Aorta (tissue), 5 donors: ENCODE measurements at regions of chr17 and their contacts with region 1.

Region 1: GRCh38 chr17:81666342-81667191 is at the starts of genes CCDC137 and OXLD1:
- DNase-seq: peak; percentile 98 to 99
- ATAC-seq: peak; percentile 97
- H3K4me3 ChIP-seq: peak within 1 kb of the TSS; percentile 61 to 65
- H3K27ac ChIP-seq: peak within 1 kb of the TSS in 1 of 2 donors; percentile 50
- H3K4me1 ChIP-seq: no peaks in the 10 kb centered on the region
- H3K27me3 ChIP-seq: no peaks in the 10 kb centered on the region
- total RNA-seq, gene CCDC137: 13.0 to 13.4 TPM
- total RNA-seq, gene OXLD1: 14.0 to 20.0 TPM

Region 2: GRCh38 chr17:81593105-81593871 is 73.3 kb before region 1 on chr17:
- intact Hi-C with region 1: no loop called
- DNase-seq: no peak
- ATAC-seq: no peak
- H3K4me3 ChIP-seq: no peak overlapping the region
- H3K27ac ChIP-seq: no peak overlapping the region
- H3K4me1 ChIP-seq: no peaks in the 10 kb centered on the region
- H3K27me3 ChIP-seq: no peaks in the 10 kb centered on the region

Region 3: DNA sequence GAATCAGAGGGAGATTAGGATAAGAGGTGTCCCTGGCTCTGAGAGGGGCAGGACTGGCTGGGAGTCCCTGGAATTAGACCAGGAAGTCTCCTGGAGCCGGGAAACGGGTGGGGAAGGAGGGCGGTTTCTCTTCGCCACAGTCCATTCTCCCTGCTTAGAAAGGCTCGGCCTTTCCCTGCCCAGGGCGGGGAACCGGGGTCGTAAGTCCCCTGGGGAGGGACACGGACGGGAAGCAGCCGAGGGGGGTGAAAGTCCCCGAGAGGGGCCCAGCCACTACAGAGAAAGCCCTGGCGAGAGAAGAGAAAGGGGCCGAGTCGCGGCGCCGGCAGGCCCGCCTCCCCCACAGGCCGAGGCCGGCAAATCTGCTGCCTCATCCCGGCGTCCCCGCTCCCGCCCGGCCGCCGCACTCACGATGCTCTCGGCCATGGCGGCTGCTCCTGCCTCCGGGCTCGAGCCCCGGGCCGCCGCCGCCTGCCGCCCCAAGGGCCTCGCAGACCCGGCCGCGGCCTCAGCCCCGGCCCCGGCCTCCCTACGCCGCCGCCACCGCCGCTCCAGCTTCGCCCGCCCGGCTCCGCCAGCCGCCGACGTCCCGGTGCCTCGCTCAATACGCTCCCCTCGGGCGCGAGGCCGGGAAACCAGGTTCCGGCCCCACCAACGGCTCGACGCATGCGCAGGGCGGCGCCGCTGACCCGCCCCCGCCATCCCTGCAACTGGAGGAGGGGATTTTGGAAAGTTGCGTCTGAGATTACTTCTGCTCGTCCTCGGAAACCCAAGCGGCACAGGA is 29.9 kb before region 1 on chr17 and contains the starts of genes NPLOC4 and TSPAN10:
- intact Hi-C with region 1: loop called in 1 of 2 experiments (anchors 1 kb)
- DNase-seq: peak; percentile 91 to 94
- ATAC-seq: peak; percentile 96
- H3K4me3 ChIP-seq: peak within 1 kb of the TSS; percentile 51 to 99
- H3K27ac ChIP-seq: peak within 1 kb of the TSS; percentile 61 to 74
- H3K4me1 ChIP-seq: peaks cover 0 to 2% of the 10 kb centered on the region in 2 donors
- H3K27me3 ChIP-seq: no peaks in the 10 kb centered on the region
- total RNA-seq, gene NPLOC4: 74.4 to 94.3 TPM
- total RNA-seq, gene TSPAN10: 0.29 to 0.66 TPM

Region 4: DNA sequence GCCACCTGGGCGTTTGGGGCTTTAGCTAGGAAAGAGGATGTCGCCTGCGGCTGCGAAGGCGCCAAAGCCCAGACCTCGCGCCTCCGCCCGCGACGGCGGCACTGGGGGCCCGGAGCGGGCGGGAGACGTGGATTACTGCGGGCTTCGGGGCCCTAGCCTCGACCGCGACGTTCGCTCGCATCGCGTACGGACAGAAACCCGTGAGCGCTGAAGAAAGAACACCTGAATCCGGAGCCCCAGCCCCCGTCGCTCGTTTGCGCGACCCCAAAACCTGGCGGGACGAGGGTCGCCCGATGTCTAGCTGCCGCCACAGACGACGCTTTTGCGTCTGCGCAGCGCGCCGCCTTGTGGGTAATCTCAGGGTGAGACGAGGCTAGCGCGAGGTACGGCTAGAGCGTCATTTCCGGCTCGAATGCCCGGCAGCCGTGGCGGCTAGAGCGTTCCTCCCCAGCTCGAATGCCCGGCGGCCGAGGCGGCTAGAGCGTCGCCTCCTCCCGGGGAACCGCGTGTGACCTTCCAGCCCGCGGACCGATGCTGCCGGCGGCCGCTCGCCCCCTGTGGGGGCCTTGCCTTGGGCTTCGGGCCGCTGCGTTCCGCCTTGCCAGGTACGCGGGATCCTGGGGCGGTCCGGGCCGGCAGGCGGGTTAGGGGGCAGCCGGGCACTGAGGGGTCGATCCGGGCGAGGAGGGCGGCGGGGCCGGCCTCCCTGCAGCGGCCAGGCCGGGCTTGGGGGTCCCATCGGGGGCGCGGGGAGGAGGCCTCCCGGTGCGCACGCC is 36.6 kb after region 1 on chr17 and contains the start of gene MRPL12:
- intact Hi-C with region 1: loop called in 1 of 2 experiments (anchors 2 kb)
- DNase-seq: peak; percentile 96 to 98
- ATAC-seq: peak; percentile 95
- H3K4me3 ChIP-seq: peak within 1 kb of the TSS; percentile 74 to 81
- H3K27ac ChIP-seq: peak within 1 kb of the TSS; percentile 71 to 87
- H3K4me1 ChIP-seq: no peaks in the 10 kb centered on the region
- H3K27me3 ChIP-seq: no peaks in the 10 kb centered on the region
- total RNA-seq, gene MRPL12: 21.1 to 27.1 TPM